ENCODE measurements at regions of chr3 and their contacts with region 1.

Region 1: DNA sequence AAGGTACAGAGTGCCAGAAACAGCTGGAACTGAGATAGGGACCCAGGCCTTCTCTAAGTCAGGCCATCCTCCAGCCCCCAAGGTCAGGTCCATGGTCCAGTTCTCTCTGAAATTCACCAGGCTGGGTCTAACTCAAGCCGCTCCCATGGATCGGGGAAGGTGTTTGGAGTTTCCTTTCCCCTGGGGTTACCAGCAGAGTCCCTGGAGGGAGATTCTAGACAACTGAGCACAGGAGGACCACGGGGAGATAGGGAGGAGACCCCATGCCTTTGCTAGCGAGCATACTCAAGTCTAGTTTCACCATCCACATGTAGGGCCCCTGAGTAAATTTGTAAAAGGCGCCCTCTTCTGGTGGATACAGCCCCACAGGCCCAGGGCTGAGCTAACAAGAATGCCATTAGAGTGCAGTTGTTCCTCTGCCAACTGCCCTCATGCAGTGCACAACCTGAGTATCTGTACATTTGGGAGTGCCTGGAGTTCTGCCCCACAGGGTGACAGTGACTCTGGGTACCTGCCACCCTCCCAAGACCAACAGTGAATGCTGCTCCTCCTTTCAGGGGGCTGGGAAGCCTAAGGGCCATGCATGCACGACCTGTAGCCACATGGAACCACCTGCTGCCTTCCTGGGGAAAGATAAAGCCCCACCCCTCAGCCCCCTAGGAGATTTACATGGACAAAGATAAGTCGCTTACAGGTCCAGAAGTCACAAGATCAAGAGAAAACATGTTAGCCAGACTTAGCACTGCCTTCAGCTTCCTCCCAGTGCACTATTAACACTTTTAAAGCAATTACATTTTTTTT is 89.0 kb downstream of the IQSEC1 start:
- DNase-seq: peak; percentile 66
- ATAC-seq: peak; percentile 95
- H3K4me3 ChIP-seq: no peak overlapping the region
- H3K27ac ChIP-seq: no peak overlapping the region
- H3K4me1 ChIP-seq: no peaks in the 10 kb centered on the region
- H3K27me3 ChIP-seq: no peaks in the 10 kb centered on the region
- CTCF ChIP-seq: peak; percentile 81
- POLR2A ChIP-seq: no peak
- RAD21 ChIP-seq: peak; percentile 74

Region 2: GRCh38 chr3:12395349-12396012 is 588.7 kb before region 1 on chr3:
- CTCF ChIA-PET with region 1: no interaction called
- POLR2A ChIA-PET with region 1: no interaction called
- dilution Hi-C with region 1: no loop called
- in situ Hi-C with region 1: no loop called
- intact Hi-C with region 1: no loop called
- DNase-seq: peak; percentile 21
- ATAC-seq: peak; percentile 68
- H3K4me3 ChIP-seq: no peak overlapping the region
- H3K27ac ChIP-seq: no peak overlapping the region
- H3K4me1 ChIP-seq: peaks cover 3% of the 10 kb centered on the region
- H3K27me3 ChIP-seq: no peaks in the 10 kb centered on the region
- CTCF ChIP-seq: no peak
- POLR2A ChIP-seq: no peak
- RAD21 ChIP-seq: no peak

Region 3: DNA sequence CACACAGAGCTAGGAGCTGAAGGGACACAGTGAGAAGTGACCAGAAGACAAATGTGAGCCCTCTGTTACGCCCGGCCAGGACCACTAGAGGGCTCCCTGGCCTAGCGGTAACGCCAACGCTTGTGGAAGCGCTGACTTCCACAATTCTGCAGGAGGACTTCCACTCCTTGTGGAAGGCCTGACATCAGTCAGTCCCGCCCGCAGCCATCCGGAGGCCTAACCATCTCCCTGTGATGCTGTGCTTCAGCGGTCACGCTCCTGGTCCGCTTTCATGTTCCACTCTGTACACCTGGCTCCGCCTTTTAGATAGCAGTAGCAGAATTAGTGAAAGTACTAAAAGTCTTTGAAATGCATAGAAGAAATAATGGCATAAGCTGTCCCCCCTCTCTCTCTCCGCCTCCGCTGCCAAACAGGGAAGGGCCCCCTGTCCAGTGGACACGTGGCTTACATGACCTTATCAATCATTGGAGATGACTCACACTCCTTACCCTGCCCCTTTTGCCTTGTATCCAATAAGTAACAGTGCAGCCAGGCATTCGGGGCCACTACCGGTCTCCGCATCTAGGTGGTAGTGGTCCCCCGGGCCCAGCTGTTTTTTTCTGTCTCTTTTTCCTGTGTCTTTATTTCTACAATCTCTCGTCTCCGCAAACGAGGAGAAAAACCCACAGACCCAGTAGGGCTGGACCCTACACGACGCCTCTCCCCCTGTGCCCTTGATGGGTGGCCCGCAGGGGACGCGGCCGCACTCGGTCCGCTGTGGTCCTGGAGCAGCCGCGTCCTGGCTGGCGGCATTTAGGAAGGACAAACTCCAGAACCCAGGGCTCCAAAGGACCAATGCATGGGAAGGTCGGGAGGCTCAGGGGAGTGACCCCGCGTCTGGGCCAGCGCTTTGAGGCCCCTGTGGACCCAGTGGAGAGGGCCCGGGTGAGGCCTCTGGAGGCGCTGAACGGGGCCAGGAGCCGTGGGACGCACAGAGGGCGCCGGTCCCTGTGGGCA is 115.9 kb before region 1 on chr3:
- CTCF ChIA-PET with region 1: interaction called, 3 read pairs
- POLR2A ChIA-PET with region 1: no interaction called
- dilution Hi-C with region 1: no loop called
- in situ Hi-C with region 1: no loop called
- intact Hi-C with region 1: loop called (anchors 1 kb)
- DNase-seq: peak; percentile 87
- ATAC-seq: peak; percentile 98
- H3K4me3 ChIP-seq: no peak overlapping the region
- H3K27ac ChIP-seq: no peak overlapping the region
- H3K4me1 ChIP-seq: no peaks in the 10 kb centered on the region; the same call in 1 of the 2 replicates
- H3K27me3 ChIP-seq: peaks cover 26% of the 10 kb centered on the region
- CTCF ChIP-seq: peak; percentile 95
- POLR2A ChIP-seq: 0 out of 2 replicates have a peak, but pooled peaks have one; percentile 24
- RAD21 ChIP-seq: peak; percentile 86

Region 4: DNA sequence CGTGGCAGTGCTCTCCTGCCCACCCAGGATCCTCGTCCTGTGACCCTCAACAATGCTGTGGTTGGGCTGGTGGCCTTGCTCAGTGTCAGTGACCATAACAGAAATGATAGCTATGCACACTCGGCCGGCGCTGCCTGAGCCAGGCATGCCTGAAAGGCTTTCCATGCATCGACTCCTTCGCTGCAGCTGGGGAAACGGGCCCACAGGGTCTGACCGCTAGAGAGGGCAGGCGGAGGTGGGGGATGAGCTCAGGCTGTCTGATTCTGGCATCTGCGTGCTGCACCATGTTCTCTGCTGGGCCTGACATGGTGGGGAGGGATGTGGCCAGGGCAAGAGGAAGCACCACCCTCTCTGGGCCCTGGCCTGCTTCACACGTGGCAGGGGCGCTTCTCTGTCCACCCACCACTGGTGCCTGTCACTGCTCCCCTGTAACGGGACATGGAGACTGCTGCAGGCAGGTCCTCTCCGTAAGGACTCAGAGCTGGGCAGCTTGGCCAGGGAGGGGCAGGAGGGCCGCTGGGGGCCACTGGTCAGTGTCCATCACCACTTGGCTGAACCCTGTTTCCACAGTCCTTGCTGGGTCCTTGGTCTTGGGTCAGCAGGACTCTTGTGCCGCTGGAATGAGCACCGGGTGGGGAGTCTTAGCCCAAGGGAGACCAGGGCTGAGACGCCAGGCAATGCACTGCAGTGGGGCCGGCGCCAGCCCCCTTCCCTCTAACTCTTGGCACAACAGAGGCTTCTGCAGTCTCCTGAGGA is 78.7 kb before region 1 on chr3:
- CTCF ChIA-PET with region 1: no interaction called
- POLR2A ChIA-PET with region 1: no interaction called
- dilution Hi-C with region 1: no loop called
- in situ Hi-C with region 1: no loop called
- intact Hi-C with region 1: no loop called
- DNase-seq: no peak
- ATAC-seq: no peak
- H3K4me3 ChIP-seq: no peak overlapping the region
- H3K27ac ChIP-seq: no peak overlapping the region
- H3K4me1 ChIP-seq: no peaks in the 10 kb centered on the region
- H3K27me3 ChIP-seq: no peaks in the 10 kb centered on the region
- CTCF ChIP-seq: no peak
- POLR2A ChIP-seq: no peak
- RAD21 ChIP-seq: no peak

Region 5: GRCh38 chr3:12994607-12995388 is 10.6 kb after region 1 on chr3:
- CTCF ChIA-PET with region 1: interaction called, 11 read pairs
- POLR2A ChIA-PET with region 1: no interaction called
- dilution Hi-C with region 1: no loop called
- in situ Hi-C with region 1: no loop called
- intact Hi-C with region 1: no loop called
- DNase-seq: peak; percentile 72
- ATAC-seq: peak; percentile 69
- H3K4me3 ChIP-seq: peak overlapping the region; percentile 63
- H3K27ac ChIP-seq: peak overlapping the region; percentile 95
- H3K4me1 ChIP-seq: peaks cover 37% of the 10 kb centered on the region
- H3K27me3 ChIP-seq: no peaks in the 10 kb centered on the region
- CTCF ChIP-seq: peak; percentile 94
- POLR2A ChIP-seq: no peak; the same call in 1 of the 2 replicates
- RAD21 ChIP-seq: peak; percentile 64

Measured in IMR-90 (cell line).